Ascending aorta (tissue), 2 donors: ENCODE measurements at regions of chr11 and their contacts with region 1.

Region 1: DNA sequence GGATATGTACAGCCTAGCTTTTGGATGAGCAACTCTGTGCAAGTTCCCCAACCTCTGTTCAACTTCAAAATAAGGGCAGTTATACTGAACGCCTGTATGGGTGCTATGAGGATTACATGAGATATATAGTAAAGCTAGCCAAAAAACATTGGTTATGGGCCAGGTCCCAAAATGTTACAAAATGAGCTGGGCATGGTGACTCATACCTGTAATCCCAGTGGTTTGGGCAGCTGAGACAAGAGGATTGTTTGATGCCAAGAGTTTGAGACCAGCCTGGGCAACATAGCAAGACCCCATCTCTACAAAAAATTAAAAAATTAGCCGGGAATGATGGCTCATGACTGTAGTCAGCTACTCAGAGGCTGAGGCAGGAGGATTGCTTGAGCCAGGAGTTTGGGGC is 118.4 kb downstream of the TEAD1 start:
- DNase-seq: peak in 1 of 2 donors; percentile 72
- H3K4me3 ChIP-seq: no peak overlapping the region
- H3K27ac ChIP-seq: peak overlapping the region in 1 of 2 donors; percentile 20
- H3K4me1 ChIP-seq: peaks cover 5 to 11% of the 10 kb centered on the region in 2 donors
- H3K27me3 ChIP-seq: no peaks in the 10 kb centered on the region
- CTCF ChIP-seq: no peak

Region 2: GRCh38 chr11:12693479-12694181 is 99.0 kb before region 1 on chr11:
- intact Hi-C with region 1: loop called (anchors 5 kb)
- DNase-seq: peak in 1 of 2 donors; percentile 86
- H3K4me3 ChIP-seq: peak overlapping the region; percentile 31 to 47
- H3K27ac ChIP-seq: peak overlapping the region; percentile 93 to 94
- H3K4me1 ChIP-seq: peaks cover 9 to 43% of the 10 kb centered on the region in 2 donors
- H3K27me3 ChIP-seq: no peaks in the 10 kb centered on the region
- CTCF ChIP-seq: no peak

Region 3: GRCh38 chr11:12813371-12814225 is 21.0 kb after region 1 on chr11:
- intact Hi-C with region 1: no loop called
- DNase-seq: no peak
- H3K4me3 ChIP-seq: no peak overlapping the region
- H3K27ac ChIP-seq: peak overlapping the region in 1 of 2 donors; percentile 3
- H3K4me1 ChIP-seq: peaks cover 0 to 13% of the 10 kb centered on the region in 2 donors
- H3K27me3 ChIP-seq: no peaks in the 10 kb centered on the region
- CTCF ChIP-seq: no peak

Region 4: GRCh38 chr11:12909879-12910278 is 117.3 kb after region 1 on chr11:
- intact Hi-C with region 1: no loop called
- DNase-seq: no peak
- H3K4me3 ChIP-seq: no peak overlapping the region
- H3K27ac ChIP-seq: no peak overlapping the region
- H3K4me1 ChIP-seq: peaks cover 1 to 2% of the 10 kb centered on the region in 2 donors
- H3K27me3 ChIP-seq: no peaks in the 10 kb centered on the region
- CTCF ChIP-seq: no peak

Region 5: DNA sequence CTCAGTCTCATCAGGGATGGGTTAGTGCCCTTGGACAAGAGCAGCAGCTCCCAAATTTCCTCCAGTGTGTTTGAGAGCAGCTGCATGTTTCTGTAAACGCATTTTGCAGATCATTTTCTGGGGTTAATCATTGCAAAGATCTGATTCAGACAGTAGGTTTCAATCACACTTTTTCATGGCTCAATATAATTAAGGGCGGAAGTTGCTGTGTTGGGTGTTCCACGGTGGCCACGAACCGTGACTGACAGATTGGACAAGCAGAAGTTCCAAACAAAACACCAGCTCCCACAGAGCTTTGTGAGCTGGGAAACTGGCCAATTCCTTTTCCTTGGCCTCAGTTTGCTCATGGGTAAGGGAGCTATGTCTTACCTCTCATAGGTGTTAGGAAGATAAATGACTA is 208.1 kb after region 1 on chr11:
- intact Hi-C with region 1: no loop called
- DNase-seq: no peak
- H3K4me3 ChIP-seq: no peak overlapping the region
- H3K27ac ChIP-seq: no peak overlapping the region
- H3K4me1 ChIP-seq: no peaks in the 10 kb centered on the region
- H3K27me3 ChIP-seq: no peaks in the 10 kb centered on the region
- CTCF ChIP-seq: no peak

Region 6: DNA sequence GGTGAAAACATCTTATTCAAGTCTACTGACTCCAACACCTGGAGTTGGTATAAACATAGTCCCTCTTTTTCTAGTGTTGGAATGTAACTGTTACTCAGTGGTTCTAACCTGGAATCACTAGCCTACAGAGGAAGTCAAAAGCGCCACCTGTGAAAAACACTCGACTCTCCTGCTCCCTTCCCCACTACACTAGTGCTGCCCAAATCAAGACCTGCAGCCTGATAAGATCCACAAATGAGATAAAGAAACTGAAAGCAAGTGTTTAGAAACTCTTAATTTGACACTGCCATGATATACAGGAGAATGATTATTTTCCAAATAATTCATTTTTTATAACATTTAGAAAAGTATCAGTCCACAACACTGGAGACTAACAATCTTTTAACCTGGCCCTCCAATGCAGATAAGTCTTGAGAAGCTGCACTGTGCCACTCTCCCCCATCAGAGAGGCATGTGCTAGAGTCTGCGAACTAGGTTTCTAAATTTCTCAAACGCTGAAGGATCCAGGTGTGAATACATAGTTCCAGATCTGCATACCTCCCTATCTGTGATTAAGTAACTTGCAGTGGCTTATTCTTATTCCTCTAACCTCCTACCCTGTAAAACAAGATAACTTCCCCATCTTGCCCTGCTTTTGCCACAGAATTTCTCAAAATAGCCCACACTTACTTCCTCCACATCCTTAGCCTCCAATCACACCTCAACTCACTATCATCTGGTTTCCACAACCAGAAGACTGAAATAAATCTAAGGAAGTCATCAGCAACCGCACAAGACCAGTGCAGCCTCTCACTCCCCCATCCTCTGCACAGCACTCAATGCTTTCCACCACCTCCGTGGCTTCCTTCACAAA is 1478.3 kb after region 1 on chr11:
- intact Hi-C with region 1: no loop called
- DNase-seq: no peak
- H3K4me3 ChIP-seq: no peak overlapping the region
- H3K27ac ChIP-seq: no peak overlapping the region
- H3K4me1 ChIP-seq: no peaks in the 10 kb centered on the region
- H3K27me3 ChIP-seq: no peaks in the 10 kb centered on the region
- CTCF ChIP-seq: no peak